ENCODE measurements at regions of chr18 and their contacts with region 1.

Region 1: GRCh38 chr18:48777026-48777743 is 173.6 kb downstream of the SMAD7 start:
- DNase-seq: no peak
- ATAC-seq: peak; percentile 95
- H3K4me3 ChIP-seq: no peak overlapping the region
- H3K27ac ChIP-seq: no peak overlapping the region; the same call in 1 of the 2 replicates
- H3K4me1 ChIP-seq: peaks cover 5 to 12% of the 10 kb centered on the region in 2 experiments; a peak in 3 of 4 replicates
- H3K27me3 ChIP-seq: no peaks in the 10 kb centered on the region
- CTCF ChIP-seq: peak; percentile 82 to 98 (median 86)
- POLR2A ChIP-seq: no peak
- RAD21 ChIP-seq: peak; percentile 92

Region 2: DNA sequence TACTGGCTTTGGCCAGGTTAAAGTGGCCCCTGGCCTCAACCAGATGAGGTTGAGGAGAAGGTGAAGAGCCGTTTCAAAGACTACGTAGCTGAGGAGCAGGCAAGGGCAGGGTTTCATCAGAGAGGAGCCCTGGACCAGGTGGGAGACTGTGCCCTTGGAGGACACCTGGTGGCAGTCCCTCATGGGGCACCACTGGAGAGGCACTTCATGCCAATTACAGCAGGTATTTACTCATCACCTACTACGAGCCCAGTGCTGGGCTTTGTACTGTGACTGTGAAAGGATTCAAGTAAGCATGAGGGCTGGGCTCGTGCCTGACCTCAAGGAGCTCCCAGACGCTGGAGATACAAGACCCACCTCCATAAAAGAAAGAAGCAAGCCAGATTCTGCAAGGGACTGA is 136.0 kb after region 1 on chr18:
- CTCF ChIA-PET with region 1: interaction called, 7 read pairs
- POLR2A ChIA-PET with region 1: no interaction called
- RAD21 ChIA-PET with region 1: interaction called in 1 of 2 experiments, 3 read pairs
- intact Hi-C with region 1: loop called (anchors 1 kb)
- DNase-seq: no peak
- ATAC-seq: peak; percentile 92
- H3K4me3 ChIP-seq: no peak overlapping the region
- H3K27ac ChIP-seq: no peak overlapping the region
- H3K4me1 ChIP-seq: no peaks in the 10 kb centered on the region; a peak in 1 of 4 replicates
- H3K27me3 ChIP-seq: no peaks in the 10 kb centered on the region
- CTCF ChIP-seq: peak; percentile 45 to 67 (median 53); a peak in 5 of 6 replicates
- POLR2A ChIP-seq: no peak
- RAD21 ChIP-seq: peak; percentile 77

Region 3: GRCh38 chr18:48949606-48950470 is 172.7 kb after region 1 on chr18:
- CTCF ChIA-PET with region 1: no interaction called
- POLR2A ChIA-PET with region 1: no interaction called
- RAD21 ChIA-PET with region 1: no interaction called
- intact Hi-C with region 1: loop called (anchors 10 kb)
- DNase-seq: no peak
- ATAC-seq: peak; percentile 35
- H3K4me3 ChIP-seq: peak overlapping the region; percentile 37 to 65
- H3K27ac ChIP-seq: peak overlapping the region; percentile 54; the same call in 1 of the 2 replicates
- H3K4me1 ChIP-seq: peaks cover 55 to 79% of the 10 kb centered on the region in 2 experiments
- H3K27me3 ChIP-seq: peaks cover 22% of the 10 kb centered on the region; the same call in 1 of the 2 replicates
- CTCF ChIP-seq: 0 out of 6 replicates have a peak, but pooled peaks of 1 of the 3 experiments have one; percentile 1
- POLR2A ChIP-seq: no peak
- RAD21 ChIP-seq: no peak

Region 4: DNA sequence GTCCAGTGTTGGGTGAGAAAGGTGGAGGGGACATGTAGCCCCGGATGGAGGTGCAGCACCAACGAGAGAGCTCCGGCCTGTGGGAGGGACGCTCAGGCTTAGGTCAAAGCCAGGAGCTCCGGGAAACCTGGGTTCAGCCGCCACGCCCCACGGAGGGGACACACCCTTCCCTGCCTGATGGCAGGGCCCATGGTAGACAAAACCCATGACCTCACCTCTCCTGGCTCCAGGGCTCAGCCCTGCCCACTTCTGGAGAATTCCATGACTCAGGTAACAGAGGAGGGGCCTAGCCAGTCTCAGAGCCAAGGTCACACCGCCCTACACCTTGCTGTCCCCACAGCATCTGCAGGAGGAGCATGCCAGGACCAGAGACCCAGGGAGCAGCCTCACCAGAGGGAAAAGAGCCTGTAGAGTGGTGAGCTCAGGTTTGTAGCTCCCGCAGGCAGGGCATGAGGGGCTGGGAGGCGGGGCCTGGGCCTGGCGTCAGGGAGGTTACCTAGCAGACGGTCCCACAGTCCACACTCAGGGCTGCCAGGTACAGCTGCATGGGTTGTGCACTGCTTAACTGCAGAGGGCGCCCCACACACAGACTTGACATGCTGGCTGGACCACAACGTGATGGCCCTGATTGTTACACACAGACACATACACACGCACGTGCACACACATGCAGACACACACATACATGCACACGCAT is 244.4 kb after region 1 on chr18:
- CTCF ChIA-PET with region 1: interaction called, 3 read pairs
- POLR2A ChIA-PET with region 1: no interaction called
- RAD21 ChIA-PET with region 1: interaction called in 1 of 2 experiments, 3 read pairs
- intact Hi-C with region 1: loop called (anchors 10 kb)
- DNase-seq: peak; percentile 83
- ATAC-seq: peak; percentile 89
- H3K4me3 ChIP-seq: peak overlapping the region; percentile 33 to 51
- H3K27ac ChIP-seq: peak overlapping the region; percentile 55; the same call in 1 of the 2 replicates
- H3K4me1 ChIP-seq: peaks cover 31 to 42% of the 10 kb centered on the region in 2 experiments
- H3K27me3 ChIP-seq: no peaks in the 10 kb centered on the region
- CTCF ChIP-seq: peak in 2 of 3 experiments; percentile 79 to 82; a peak in 4 of 6 replicates
- POLR2A ChIP-seq: no peak
- RAD21 ChIP-seq: no peak

Region 5: GRCh38 chr18:49178736-49179135 is 401.6 kb after region 1 on chr18:
- CTCF ChIA-PET with region 1: interaction called, 3 read pairs
- POLR2A ChIA-PET with region 1: no interaction called
- RAD21 ChIA-PET with region 1: interaction called, 3 read pairs
- intact Hi-C with region 1: loop called (anchors 2 kb)
- DNase-seq: peak; percentile 19
- ATAC-seq: peak; percentile 73
- H3K4me3 ChIP-seq: no peak overlapping the region
- H3K27ac ChIP-seq: no peak overlapping the region
- H3K4me1 ChIP-seq: peaks cover 9% of the 10 kb centered on the region in 2 experiments; a peak in 2 of 4 replicates
- H3K27me3 ChIP-seq: no peaks in the 10 kb centered on the region
- CTCF ChIP-seq: peak; percentile 55 to 74 (median 69); a peak in 5 of 6 replicates
- POLR2A ChIP-seq: no peak
- RAD21 ChIP-seq: peak; percentile 73

Region 6: DNA sequence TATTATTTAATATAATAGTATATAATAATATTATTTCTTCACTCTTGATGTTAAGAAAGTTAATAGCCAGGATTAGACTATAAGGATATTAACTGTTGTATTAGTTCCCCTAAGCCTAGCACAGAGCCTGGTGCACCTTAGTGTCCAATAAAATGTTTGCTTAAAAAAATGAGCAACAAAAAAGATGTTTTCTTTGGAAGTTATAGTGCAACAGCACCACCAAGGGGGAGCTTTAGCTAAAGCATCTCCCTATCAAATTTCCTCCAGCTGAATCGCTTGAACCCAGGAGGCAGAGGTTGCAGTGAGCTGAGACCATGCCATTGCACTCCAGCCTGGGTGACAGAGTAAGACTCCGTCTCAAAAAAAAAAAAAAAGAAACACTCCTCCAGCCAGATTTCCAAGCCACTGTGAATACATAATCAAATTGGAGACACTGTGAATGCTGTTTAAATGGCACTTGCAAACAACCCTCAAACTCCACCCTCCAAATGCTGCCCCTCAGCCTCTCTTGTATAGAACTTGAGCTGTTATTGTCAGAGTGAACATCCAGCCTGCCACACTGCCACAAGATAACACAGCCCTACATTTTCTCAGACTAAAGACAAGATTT is 461.4 kb after region 1 on chr18:
- CTCF ChIA-PET with region 1: interaction called, 9 read pairs
- POLR2A ChIA-PET with region 1: no interaction called
- RAD21 ChIA-PET with region 1: no interaction called
- intact Hi-C with region 1: loop called (anchors 2 kb)
- DNase-seq: peak; percentile 13
- ATAC-seq: peak; percentile 57; the same call in 1 of the 2 replicates
- H3K4me3 ChIP-seq: no peak overlapping the region
- H3K27ac ChIP-seq: no peak overlapping the region
- H3K4me1 ChIP-seq: no peaks in the 10 kb centered on the region
- H3K27me3 ChIP-seq: no peaks in the 10 kb centered on the region
- CTCF ChIP-seq: peak; percentile 57 to 63 (median 61)
- POLR2A ChIP-seq: no peak
- RAD21 ChIP-seq: peak; percentile 79

Measured in HCT116 (cell line).